ENCODE measurements at regions of chr2 and their contacts with region 1.

Region 1: DNA sequence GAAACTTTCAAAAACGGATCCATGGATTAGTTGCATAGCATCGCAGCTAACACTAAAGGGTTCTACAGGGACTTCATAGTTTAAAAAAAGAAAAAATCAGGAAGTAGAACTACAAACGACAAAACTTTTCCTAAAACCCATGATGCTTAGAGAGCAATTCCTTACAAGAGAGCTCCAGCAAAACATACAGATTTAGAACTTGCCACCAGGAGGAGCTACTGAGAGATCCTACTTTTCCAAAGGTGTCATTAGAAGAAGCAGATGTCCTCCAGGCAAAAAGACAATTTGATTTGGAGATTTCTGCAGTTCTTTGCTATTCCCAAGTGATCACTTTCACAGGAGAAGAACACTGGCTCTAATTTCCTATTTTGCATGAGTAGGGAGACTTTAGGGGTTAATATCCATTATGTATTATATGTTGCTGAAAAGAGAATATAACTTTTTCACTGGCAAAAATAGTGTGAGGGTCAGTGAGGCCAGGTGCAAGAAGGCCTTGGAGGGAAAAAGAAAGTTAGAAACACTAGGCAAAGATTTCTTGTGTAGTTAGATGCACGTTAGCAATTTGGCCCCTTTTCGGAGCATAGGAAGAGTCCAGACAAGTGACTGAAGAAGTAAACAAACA is 436.2 kb downstream of the SUCLG1 start:
- DNase-seq: no peak
- ATAC-seq: no peak
- H3K4me3 Mint-ChIP-seq: no peak overlapping the region
- H3K27ac Mint-ChIP-seq: no peak overlapping the region
- H3K4me1 Mint-ChIP-seq: no peaks in the 10 kb centered on the region
- H3K27me3 Mint-ChIP-seq: no peaks in the 10 kb centered on the region

Region 2: DNA sequence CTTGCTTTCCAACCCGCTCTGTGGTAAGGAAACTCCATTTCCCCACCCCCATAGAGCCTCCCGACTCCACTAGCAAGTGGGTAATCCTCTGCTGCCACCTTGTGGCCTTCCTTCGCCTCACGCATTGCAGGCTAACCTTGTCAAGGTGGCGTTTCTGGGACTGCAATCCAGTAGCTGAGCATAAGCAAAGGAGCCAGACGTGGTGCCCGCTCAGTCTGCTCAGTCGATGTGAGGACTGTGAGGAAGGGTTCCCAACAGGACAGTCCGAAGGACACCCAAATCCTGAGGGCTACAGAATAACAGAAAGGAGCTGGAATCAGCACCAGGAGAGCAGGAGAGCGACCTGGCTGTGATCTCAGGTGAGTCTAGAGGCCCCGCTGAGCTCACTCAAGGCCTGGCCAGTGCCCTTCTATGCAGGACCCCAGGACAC is 292.0 kb after region 1 on chr2:
- CTCF ChIA-PET with region 1: interaction called, 10 read pairs
- DNase-seq: peak; percentile 82
- ATAC-seq: peak; percentile 83
- H3K4me3 Mint-ChIP-seq: no peak overlapping the region
- H3K27ac Mint-ChIP-seq: no peak overlapping the region
- H3K4me1 Mint-ChIP-seq: no peaks in the 10 kb centered on the region
- H3K27me3 Mint-ChIP-seq: peaks cover 11% of the 10 kb centered on the region

Measured in activated CD8-positive, alpha-beta memory T cell treated with anti-CD3 and anti-CD28 coated beads, Interleukin-2, amount 10 ng/mL, durations not matched to agents 7 days and 5 days (primary cell).